HAP-1 (cell line): ENCODE measurements at regions of chr22 and their contacts with region 1.

Region 1: DNA sequence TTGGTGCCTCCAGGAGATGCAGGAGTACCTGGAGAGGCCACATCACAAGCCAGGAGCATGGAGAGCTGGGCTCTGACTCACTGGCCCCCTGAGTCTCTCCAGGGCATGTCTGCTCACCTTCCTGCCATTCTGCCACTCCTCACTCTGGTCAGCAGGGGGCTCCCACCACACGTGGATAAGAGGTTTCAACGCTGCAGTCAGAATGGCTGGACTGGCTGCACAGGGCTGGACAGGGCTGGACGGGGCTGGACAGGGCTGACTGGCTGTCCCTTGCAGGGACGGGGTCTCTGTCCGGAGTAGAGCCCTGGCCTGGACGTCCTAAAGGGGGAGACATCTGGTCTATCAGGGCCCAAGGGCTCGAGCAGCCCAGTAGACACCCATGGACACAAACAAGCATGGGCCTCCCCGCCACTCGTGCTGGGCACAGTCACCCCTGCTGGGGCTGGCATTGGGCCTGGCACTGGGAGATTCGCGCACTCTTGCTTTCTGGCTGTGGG is 34.6 kb downstream of the CYTH4 start:
- DNase-seq: peak; percentile 62 to 84
- H3K4me3 ChIP-seq: no peak overlapping the region
- H3K4me1 ChIP-seq: no peaks in the 10 kb centered on the region
- H3K27me3 ChIP-seq: no peaks in the 10 kb centered on the region

Region 2: GRCh38 chr22:37199103-37199759 is 117.7 kb before region 1 on chr22:
- in situ Hi-C with region 1: no loop called
- DNase-seq: peak; percentile 92 to 99
- H3K4me3 ChIP-seq: peak overlapping the region; percentile 60
- H3K4me1 ChIP-seq: peaks cover 4% of the 10 kb centered on the region
- H3K27me3 ChIP-seq: no peaks in the 10 kb centered on the region

Region 3: DNA sequence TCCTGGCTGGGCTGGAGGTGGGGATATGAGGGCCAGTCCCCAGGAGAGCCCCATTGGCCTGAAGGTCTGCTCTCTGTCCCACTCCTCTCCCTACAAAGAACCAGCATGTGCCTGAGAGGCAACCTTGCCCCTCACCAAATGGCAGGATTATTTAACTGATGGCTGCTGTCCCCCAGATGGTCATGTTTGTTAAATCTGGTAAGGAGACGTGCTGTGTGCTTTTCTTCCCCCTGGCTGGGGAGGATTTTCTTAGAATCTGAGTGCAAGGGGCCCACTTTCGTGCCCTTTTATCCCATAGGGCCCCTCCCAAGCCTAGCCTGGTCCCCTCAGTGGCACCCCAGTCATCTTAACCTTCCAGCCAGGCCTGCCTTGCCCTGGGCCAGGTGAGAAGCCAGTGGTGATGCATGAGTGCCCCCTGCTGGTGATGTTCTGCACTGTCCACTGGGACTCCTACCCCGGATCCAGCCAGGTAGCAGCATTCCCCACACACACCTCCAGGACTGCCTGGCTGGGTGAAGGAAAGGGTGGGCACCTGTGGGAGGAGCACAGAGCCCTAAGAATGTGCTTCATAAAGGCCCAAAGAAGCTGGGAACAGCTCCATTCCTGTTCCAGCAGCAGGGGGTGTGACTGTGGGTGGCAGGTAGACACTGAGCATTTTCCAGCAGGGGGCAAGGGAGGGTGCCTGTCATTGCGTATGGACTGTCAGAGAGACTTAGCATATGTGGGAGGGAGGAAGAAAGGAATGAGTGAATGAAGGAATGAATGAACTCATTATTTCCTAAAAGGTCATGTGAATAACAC is 140.4 kb after region 1 on chr22:
- in situ Hi-C with region 1: loop called (anchors 5 kb)
- DNase-seq: peak; percentile 59 to 90
- H3K4me3 ChIP-seq: no peak overlapping the region
- H3K4me1 ChIP-seq: no peaks in the 10 kb centered on the region
- H3K27me3 ChIP-seq: no peaks in the 10 kb centered on the region